ENCODE measurements at regions of chr10 and their contacts with region 1.

Region 1: DNA sequence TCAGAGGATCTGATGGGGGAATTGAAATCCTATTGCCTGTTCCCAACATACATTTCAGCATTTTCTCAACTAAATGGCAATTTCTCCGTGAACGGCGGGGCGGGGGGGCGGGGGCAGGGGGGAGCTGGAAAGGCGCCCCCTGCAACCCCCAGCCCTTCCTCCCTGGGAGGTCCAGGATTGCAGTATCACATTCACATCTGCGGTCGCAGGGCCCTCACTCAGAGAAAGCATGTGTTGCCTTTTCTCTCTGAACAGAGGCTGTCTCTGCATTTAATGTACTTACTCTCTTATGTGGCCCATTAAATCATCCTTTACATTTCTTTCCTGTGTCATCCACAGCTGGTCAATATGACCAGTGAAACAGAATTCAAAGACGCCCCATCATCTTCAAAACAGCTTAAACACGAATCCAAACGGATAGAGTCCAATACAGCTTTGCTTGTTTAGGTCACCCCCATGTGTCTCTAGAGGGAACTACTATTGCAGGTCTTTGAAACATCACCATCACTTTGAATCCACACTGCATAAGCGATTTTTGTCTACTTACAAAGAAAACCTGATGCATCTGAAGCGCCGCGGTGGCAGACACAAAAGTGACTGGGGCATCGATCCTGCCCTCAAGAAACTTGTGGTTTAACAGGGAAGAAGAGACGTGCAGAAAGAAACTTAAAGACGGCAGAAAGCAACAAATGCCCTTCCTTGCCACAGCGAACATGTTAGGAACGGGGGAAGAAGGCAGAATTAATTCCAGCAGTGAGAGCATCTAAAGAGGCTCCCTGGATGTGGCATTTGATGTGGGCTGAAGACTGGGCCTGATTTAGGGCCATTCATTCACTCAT is 17.0 kb upstream of the ECHDC3 start:
- DNase-seq: no peak
- H3K4me3 ChIP-seq: no peak overlapping the region
- H3K27ac ChIP-seq: no peak overlapping the region
- H3K4me1 ChIP-seq: no peaks in the 10 kb centered on the region
- H3K27me3 ChIP-seq: no peaks in the 10 kb centered on the region
- CTCF ChIP-seq: peak in 2 of 3 experiments; percentile 59 to 60; a peak in 3 of 4 replicates
- EP300 ChIP-seq: no peak
- POLR2A ChIP-seq: no peak
- RAD21 ChIP-seq: peak; percentile 83

Region 2: DNA sequence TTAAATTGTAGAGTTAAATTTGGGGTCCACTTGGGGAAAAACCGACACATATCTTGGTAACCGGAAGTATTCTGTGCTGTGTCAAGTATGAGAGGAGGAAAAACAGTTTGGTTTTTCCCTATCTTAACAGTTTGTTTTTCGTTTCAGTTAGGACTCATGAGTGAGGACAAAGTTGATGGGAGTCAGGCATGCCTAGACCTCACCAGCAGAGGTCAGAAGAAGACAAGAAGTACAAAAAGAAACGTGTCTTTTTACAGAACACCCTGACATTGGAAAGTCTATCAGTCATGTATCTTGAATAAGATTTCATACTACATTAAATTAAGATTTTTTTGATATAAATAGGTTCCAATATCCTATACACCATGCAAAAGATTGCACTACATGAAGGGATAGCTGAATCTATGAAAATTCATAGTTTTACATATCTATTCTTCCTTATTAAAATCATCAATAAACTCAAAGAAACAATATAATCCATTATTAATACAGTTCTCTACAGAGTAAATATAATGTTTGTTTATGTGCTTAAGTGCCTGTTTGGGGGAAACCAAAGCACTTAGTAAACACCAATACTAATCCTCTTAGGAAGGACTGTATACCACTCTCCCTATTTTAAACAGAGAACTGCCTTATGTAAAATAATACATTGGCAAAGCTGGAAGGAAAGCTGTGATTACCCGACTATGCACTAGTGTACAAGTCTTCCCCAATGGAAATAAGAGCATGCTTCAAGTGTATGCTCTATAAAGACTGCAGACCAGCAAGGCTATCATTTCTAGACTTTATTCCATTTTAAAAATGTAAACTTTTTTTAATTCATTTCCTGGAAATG is 209.3 kb before region 1 on chr10:
- CTCF ChIA-PET with region 1: interaction called, 11 read pairs
- POLR2A ChIA-PET with region 1: no interaction called
- DNase-seq: no peak
- H3K4me3 ChIP-seq: no peak overlapping the region
- H3K27ac ChIP-seq: no peak overlapping the region
- H3K4me1 ChIP-seq: peaks cover 0 to 5% (median 0%) of the 10 kb centered on the region in 4 experiments; a peak in 1 of 7 replicates
- H3K27me3 ChIP-seq: no peaks in the 10 kb centered on the region
- CTCF ChIP-seq: peak in 2 of 3 experiments; percentile 62 to 79; a peak in 3 of 4 replicates
- EP300 ChIP-seq: no peak
- POLR2A ChIP-seq: no peak
- RAD21 ChIP-seq: peak; percentile 90 to 93

Region 3: GRCh38 chr10:11520892-11521291 is 204.3 kb before region 1 on chr10:
- CTCF ChIA-PET with region 1: interaction called, 11 read pairs
- POLR2A ChIA-PET with region 1: no interaction called
- DNase-seq: no peak
- H3K4me3 ChIP-seq: no peak overlapping the region
- H3K27ac ChIP-seq: no peak overlapping the region
- H3K4me1 ChIP-seq: no peaks in the 10 kb centered on the region
- H3K27me3 ChIP-seq: no peaks in the 10 kb centered on the region
- CTCF ChIP-seq: no peak
- EP300 ChIP-seq: no peak
- POLR2A ChIP-seq: no peak
- RAD21 ChIP-seq: no peak

Region 4: GRCh38 chr10:11612371-11613039 is 112.7 kb before region 1 on chr10:
- CTCF ChIA-PET with region 1: no interaction called
- POLR2A ChIA-PET with region 1: no interaction called
- DNase-seq: no peak
- H3K4me3 ChIP-seq: peak overlapping the region in 2 of 4 experiments; percentile 97 to 98; a peak in 3 of 8 replicates
- H3K27ac ChIP-seq: no peak overlapping the region
- H3K4me1 ChIP-seq: peaks cover 4 to 7% (median 6%) of the 10 kb centered on the region in 4 experiments; a peak in 6 of 7 replicates
- H3K27me3 ChIP-seq: no peaks in the 10 kb centered on the region; a peak in 1 of 7 replicates
- CTCF ChIP-seq: no peak
- EP300 ChIP-seq: no peak
- POLR2A ChIP-seq: no peak
- RAD21 ChIP-seq: no peak

Region 5: GRCh38 chr10:11663763-11664555 is 61.2 kb before region 1 on chr10:
- CTCF ChIA-PET with region 1: no interaction called
- POLR2A ChIA-PET with region 1: no interaction called
- DNase-seq: no peak
- H3K4me3 ChIP-seq: no peak overlapping the region
- H3K27ac ChIP-seq: no peak overlapping the region
- H3K4me1 ChIP-seq: no peaks in the 10 kb centered on the region
- H3K27me3 ChIP-seq: no peaks in the 10 kb centered on the region
- CTCF ChIP-seq: no peak
- EP300 ChIP-seq: no peak
- POLR2A ChIP-seq: no peak
- RAD21 ChIP-seq: no peak

Region 6: GRCh38 chr10:11772575-11773288 is 47.6 kb after region 1 on chr10:
- CTCF ChIA-PET with region 1: no interaction called
- POLR2A ChIA-PET with region 1: no interaction called
- DNase-seq: no peak
- H3K4me3 ChIP-seq: no peak overlapping the region
- H3K27ac ChIP-seq: no peak overlapping the region
- H3K4me1 ChIP-seq: no peaks in the 10 kb centered on the region; a peak in 1 of 7 replicates
- H3K27me3 ChIP-seq: no peaks in the 10 kb centered on the region
- CTCF ChIP-seq: no peak
- EP300 ChIP-seq: no peak
- POLR2A ChIP-seq: no peak
- RAD21 ChIP-seq: no peak

Region 7: DNA sequence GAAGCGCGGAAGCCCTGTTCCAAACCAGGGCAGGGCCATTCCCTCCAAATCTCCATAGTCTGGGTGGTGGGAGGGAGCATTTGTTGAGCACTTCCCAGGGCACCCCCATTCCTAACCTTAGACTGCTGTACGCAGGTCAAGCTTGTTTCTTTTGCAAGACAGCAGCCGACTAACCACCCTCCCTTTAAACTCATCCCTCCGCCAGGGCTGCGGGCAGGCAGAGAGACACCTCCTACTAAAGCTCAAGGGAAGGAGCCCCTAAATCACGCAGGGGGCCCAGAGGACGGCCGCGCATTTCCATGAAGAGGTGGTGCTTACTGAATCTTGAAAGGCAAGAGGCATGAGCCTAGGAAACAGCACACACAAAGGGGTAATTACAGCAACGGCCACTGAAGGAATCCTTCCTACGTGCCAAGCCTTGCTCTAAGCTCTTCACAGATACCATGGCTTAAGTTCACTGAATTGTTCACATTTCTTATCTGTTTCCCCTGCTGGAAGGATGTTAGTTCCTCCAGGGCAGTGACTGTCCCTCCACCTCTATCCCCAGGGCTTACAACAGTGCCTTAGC is 188.0 kb after region 1 on chr10:
- CTCF ChIA-PET with region 1: no interaction called
- POLR2A ChIA-PET with region 1: no interaction called
- DNase-seq: no peak
- H3K4me3 ChIP-seq: no peak overlapping the region
- H3K27ac ChIP-seq: no peak overlapping the region
- H3K4me1 ChIP-seq: no peaks in the 10 kb centered on the region; a peak in 2 of 7 replicates
- H3K27me3 ChIP-seq: no peaks in the 10 kb centered on the region
- CTCF ChIP-seq: no peak
- EP300 ChIP-seq: no peak
- POLR2A ChIP-seq: no peak
- RAD21 ChIP-seq: no peak